ENCODE measurements at regions of chr1 and their contacts with region 1.

Region 1: GRCh38 chr1:228405987-228406265 is 709 bp downstream of the TRIM11 start:
- DNase-seq: no peak
- ATAC-seq: no peak
- H3K4me3 ChIP-seq: peak overlapping the region; percentile 38 to 89 (median 81)
- H3K4me3 Mint-ChIP-seq: peak overlapping the region; percentile 92
- H3K27ac ChIP-seq: peak overlapping the region in 1 of 2 donors; percentile 83
- H3K27ac Mint-ChIP-seq: peak overlapping the region; percentile 81
- H3K4me1 ChIP-seq: peaks cover 27 to 39% of the 10 kb centered on the region in 2 donors
- H3K4me1 Mint-ChIP-seq: peaks cover 47% of the 10 kb centered on the region
- H3K27me3 ChIP-seq: no peaks in the 10 kb centered on the region
- H3K27me3 Mint-ChIP-seq: no peaks in the 10 kb centered on the region
- CTCF ChIP-seq: no peak

Region 2: GRCh38 chr1:227787513-227788270 is 618.2 kb before region 1 on chr1:
- CTCF ChIA-PET with region 1: no interaction called
- POLR2A ChIA-PET with region 1: no interaction called
- intact Hi-C with region 1: loop called (anchors 5 kb)
- DNase-seq: peak; percentile 97
- ATAC-seq: peak; percentile 92
- H3K4me3 ChIP-seq: peak overlapping the region; percentile 39 to 79 (median 76)
- H3K4me3 Mint-ChIP-seq: peak overlapping the region; percentile 91
- H3K27ac ChIP-seq: peak overlapping the region; percentile 27 to 57
- H3K27ac Mint-ChIP-seq: peak overlapping the region; percentile 68
- H3K4me1 ChIP-seq: peaks cover 26 to 35% of the 10 kb centered on the region in 2 donors
- H3K4me1 Mint-ChIP-seq: peaks cover 19% of the 10 kb centered on the region
- H3K27me3 ChIP-seq: no peaks in the 10 kb centered on the region
- H3K27me3 Mint-ChIP-seq: no peaks in the 10 kb centered on the region
- CTCF ChIP-seq: no peak

Region 3: GRCh38 chr1:228109073-228109961 is 296.6 kb before region 1 on chr1 and contains the start of gene MRPL55:
- CTCF ChIA-PET with region 1: no interaction called
- POLR2A ChIA-PET with region 1: interaction called, 3 read pairs
- intact Hi-C with region 1: loop called (anchors 1 kb)
- DNase-seq: peak; percentile 98
- ATAC-seq: peak; percentile 99
- H3K4me3 ChIP-seq: peak within 1 kb of the TSS; percentile 60 to 97 (median 95)
- H3K4me3 Mint-ChIP-seq: peak within 1 kb of the TSS; percentile 92
- H3K27ac ChIP-seq: peak within 1 kb of the TSS; percentile 95
- H3K27ac Mint-ChIP-seq: peak within 1 kb of the TSS; percentile 87
- H3K4me1 ChIP-seq: peaks cover 17 to 26% of the 10 kb centered on the region in 2 donors
- H3K4me1 Mint-ChIP-seq: peaks cover 25% of the 10 kb centered on the region
- H3K27me3 ChIP-seq: no peaks in the 10 kb centered on the region
- H3K27me3 Mint-ChIP-seq: no peaks in the 10 kb centered on the region
- CTCF ChIP-seq: no peak
- total RNA-seq, gene MRPL55: 38.9 and 42.4 TPM in 2 replicates

Region 4: GRCh38 chr1:228158151-228159022 is 247.5 kb before region 1 on chr1:
- CTCF ChIA-PET with region 1: no interaction called
- POLR2A ChIA-PET with region 1: interaction called, 10 read pairs
- intact Hi-C with region 1: no loop called
- DNase-seq: no peak
- ATAC-seq: no peak
- H3K4me3 ChIP-seq: no peak overlapping the region
- H3K4me3 Mint-ChIP-seq: no peak overlapping the region
- H3K27ac ChIP-seq: no peak overlapping the region
- H3K27ac Mint-ChIP-seq: no peak overlapping the region
- H3K4me1 ChIP-seq: peaks cover 0 to 9% of the 10 kb centered on the region in 2 donors
- H3K4me1 Mint-ChIP-seq: no peaks in the 10 kb centered on the region
- H3K27me3 ChIP-seq: peaks cover 0 to 23% (median 0%) of the 10 kb centered on the region in 4 experiments
- H3K27me3 Mint-ChIP-seq: peaks cover 3% of the 10 kb centered on the region
- CTCF ChIP-seq: no peak

Region 5: DNA sequence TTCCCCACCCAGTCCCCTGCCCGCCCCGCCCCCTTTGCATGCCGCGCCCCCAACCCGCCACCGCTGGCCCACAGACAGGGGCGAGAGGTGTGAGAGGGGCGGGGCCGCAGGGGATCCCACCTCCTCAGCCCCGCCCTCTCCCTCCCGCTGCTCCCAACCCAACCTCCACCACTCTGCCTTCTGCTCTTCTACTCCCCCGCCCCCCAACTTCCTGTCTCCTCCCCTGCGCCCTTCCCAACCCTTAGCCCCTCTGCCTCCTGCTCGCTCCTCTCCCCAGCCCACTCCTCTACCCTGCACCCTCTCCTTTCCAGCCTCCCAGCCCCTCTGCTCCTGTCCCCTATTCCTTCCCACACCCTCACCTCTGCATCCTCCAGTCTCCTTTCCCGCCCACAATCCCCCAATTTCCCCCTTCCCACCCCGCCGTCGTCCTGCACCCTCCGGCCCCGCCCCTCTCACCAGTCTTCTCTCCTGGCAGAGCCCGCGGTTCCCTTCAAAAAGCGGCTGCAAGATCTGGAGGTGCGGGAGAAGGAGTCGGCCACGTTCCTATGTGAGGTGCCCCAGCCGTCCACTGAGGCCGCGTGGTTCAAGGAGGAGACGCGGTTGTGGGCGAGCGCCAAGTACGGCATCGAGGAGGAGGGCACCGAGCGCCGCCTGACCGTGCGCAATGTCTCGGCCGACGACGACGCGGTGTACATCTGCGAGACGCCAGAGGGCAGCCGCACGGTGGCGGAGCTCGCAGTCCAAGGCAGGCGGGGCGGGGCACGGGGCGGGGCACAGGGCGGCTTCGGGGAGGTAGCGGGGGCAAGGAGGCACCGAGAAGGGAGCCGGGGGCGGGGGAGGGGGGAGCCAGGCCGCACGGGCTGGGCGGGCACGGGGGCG is 192.7 kb before region 1 on chr1:
- CTCF ChIA-PET with region 1: no interaction called
- POLR2A ChIA-PET with region 1: interaction called, 3 read pairs
- intact Hi-C with region 1: loop called (anchors 1 kb)
- DNase-seq: peak; percentile 91
- ATAC-seq: peak; percentile 93
- H3K4me3 ChIP-seq: peak overlapping the region; percentile 19 to 73 (median 57)
- H3K4me3 Mint-ChIP-seq: peak overlapping the region; percentile 97
- H3K27ac ChIP-seq: peak overlapping the region in 1 of 2 donors; percentile 41
- H3K27ac Mint-ChIP-seq: peak overlapping the region; percentile 75
- H3K4me1 ChIP-seq: peaks cover 0 to 8% of the 10 kb centered on the region in 2 donors
- H3K4me1 Mint-ChIP-seq: peaks cover 5% of the 10 kb centered on the region
- H3K27me3 ChIP-seq: peaks cover 0 to 2% (median 0%) of the 10 kb centered on the region in 4 experiments
- H3K27me3 Mint-ChIP-seq: no peaks in the 10 kb centered on the region
- CTCF ChIP-seq: peak; percentile 34

Region 6: DNA sequence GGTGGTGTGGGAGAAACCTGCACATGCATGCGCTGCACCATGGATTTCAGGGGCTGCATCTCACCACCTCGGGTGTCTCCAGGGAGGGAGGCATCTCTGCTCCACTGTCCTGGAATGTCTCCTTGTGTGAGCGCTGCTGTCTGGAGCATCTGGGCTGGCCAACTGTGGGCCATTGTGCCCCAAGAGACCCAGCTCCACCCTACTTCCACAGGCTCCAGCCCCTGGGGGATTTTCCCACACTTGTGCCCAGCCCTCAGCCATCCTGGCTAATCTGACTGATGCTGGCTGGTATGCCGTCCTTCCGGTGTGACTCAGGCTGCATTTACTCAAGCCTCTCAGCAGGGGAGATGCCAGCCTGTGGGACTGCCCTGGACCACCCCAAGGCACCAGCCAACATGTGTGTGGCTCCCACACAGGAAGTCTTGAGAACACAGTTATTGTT is 61.3 kb before region 1 on chr1:
- CTCF ChIA-PET with region 1: no interaction called
- POLR2A ChIA-PET with region 1: no interaction called
- intact Hi-C with region 1: no loop called
- DNase-seq: no peak
- ATAC-seq: no peak
- H3K4me3 ChIP-seq: no peak overlapping the region
- H3K4me3 Mint-ChIP-seq: no peak overlapping the region
- H3K27ac ChIP-seq: no peak overlapping the region
- H3K27ac Mint-ChIP-seq: no peak overlapping the region
- H3K4me1 ChIP-seq: no peaks in the 10 kb centered on the region
- H3K4me1 Mint-ChIP-seq: no peaks in the 10 kb centered on the region
- H3K27me3 ChIP-seq: no peaks in the 10 kb centered on the region
- H3K27me3 Mint-ChIP-seq: no peaks in the 10 kb centered on the region
- CTCF ChIP-seq: no peak

Region 7: DNA sequence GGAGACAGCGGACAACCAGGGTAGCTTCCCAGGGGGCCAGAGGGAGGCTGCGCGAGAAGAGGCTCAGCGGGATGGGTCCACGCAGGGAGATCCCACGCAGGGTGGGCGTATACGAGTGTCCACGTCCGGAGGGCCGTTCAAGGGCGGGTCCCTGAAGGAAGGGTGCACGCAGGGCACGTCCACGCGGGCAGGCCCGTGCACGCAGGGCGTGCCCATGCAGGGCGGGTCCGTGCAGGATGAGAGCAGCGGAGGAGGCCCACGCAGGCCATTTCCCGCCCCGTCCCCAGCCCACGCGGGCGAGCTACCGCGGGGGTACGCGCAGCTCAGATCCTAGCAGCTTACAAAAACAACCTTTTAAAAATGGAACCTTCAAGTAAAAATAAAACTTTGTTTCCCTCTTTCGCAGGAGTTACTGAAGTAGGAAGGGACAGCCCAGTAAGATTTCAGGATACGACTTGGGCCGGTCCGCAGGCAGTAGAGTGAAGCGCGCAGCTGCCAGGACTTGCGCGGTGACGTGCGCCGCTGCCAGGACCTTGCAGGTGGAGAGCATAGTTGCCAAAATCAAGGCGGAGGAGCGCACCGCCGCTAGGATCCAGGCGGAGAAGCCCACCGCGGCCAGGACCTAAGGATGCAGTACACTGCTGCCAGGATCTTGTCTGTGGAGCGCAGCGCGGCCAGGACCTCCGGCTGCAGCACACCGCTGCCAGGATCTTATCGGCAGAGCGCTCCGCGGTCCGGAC is 80.8 kb after region 1 on chr1:
- CTCF ChIA-PET with region 1: no interaction called
- POLR2A ChIA-PET with region 1: interaction called, 9 read pairs
- intact Hi-C with region 1: loop called (anchors 2 kb)
- DNase-seq: peak; percentile 97
- ATAC-seq: peak; percentile 70
- H3K4me3 ChIP-seq: peak overlapping the region; percentile 74 to 98 (median 93)
- H3K4me3 Mint-ChIP-seq: peak overlapping the region; percentile 97
- H3K27ac ChIP-seq: peak overlapping the region; percentile 100
- H3K27ac Mint-ChIP-seq: peak overlapping the region; percentile 100
- H3K4me1 ChIP-seq: peaks cover 14 to 25% of the 10 kb centered on the region in 2 donors
- H3K4me1 Mint-ChIP-seq: peaks cover 36% of the 10 kb centered on the region
- H3K27me3 ChIP-seq: no peaks in the 10 kb centered on the region
- H3K27me3 Mint-ChIP-seq: no peaks in the 10 kb centered on the region
- CTCF ChIP-seq: no peak

Region 8: GRCh38 chr1:229470406-229471043 is 1064.6 kb after region 1 on chr1:
- CTCF ChIA-PET with region 1: no interaction called
- POLR2A ChIA-PET with region 1: interaction called, 15 read pairs
- intact Hi-C with region 1: no loop called
- DNase-seq: no peak
- ATAC-seq: no peak
- H3K4me3 ChIP-seq: no peak overlapping the region
- H3K4me3 Mint-ChIP-seq: no peak overlapping the region
- H3K27ac ChIP-seq: no peak overlapping the region
- H3K27ac Mint-ChIP-seq: no peak overlapping the region
- H3K4me1 ChIP-seq: no peaks in the 10 kb centered on the region
- H3K4me1 Mint-ChIP-seq: peaks cover 4% of the 10 kb centered on the region
- H3K27me3 ChIP-seq: no peaks in the 10 kb centered on the region
- H3K27me3 Mint-ChIP-seq: no peaks in the 10 kb centered on the region
- CTCF ChIP-seq: no peak

Measured in B cell (primary cell).